KBM-7 (cell line): ENCODE measurements at regions of chr11 and their contacts with region 1.

Region 1: DNA sequence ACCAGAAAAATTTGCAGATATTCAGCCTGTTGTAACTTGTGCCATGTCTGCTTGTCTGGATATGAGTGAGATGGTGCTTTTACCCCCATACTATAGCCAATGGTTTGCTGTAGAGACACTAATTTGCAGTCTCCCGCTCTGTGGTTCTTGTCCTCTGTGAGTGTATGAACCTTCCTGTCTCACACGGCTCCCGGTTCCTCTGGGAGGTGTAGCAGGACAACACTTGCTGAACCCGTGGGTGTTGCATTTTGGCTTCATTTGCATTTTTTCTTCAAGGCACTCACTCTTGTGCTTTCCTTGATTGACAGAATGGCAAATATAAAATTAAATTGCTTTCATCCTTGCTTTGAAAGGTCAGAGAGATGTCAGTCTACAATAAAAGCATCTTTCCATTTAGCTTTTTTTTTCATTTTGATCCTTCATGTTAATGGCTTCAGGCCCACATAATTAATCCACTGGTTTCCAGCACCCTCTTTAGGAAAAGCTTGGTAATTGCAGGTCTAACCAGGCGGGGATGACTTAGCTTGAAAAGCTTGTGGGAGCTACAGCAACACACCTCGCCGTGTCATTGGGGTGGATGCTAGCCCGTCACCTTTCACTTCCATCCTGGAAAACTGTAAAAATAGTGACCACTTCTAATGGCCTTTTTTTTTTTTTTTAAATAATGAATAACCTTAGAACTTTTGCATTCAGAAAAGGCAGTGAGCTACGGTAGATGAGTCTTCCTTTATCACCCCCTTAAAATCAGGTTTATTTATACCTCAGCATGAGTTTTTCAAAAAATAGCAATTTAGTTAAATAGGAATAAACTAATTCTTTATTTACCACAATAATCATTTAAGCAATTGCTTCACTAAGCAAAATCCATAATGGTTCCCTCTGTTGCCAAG is 27.4 kb upstream of the ST14 start:
- DNase-seq: peak; percentile 81

Region 2: GRCh38 chr11:129861702-129862113 is 270.5 kb before region 1 on chr11:
- in situ Hi-C with region 1: no loop called
- DNase-seq: no peak

Region 3: DNA sequence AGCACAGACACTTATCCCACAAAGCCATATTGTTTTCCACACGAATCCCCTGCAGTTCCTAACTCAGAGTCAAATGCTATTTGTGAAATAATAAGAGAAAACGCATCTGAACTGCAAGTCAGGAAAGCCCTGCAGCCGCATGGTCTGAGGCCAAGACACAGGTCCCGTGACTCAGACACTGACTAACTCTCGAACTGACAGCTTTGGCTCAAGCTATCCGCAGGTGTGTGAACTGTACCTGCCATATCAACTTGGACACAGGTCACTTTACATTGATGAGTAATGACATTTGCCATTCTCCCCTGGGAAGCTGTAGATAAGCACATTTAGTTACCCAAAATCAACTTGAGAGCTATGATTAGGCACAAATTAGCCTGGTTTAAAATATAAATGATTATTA is 201.9 kb before region 1 on chr11:
- in situ Hi-C with region 1: loop called (anchors 25 kb)
- DNase-seq: no peak